Sigmoid colon (tissue), 7 donors: ENCODE measurements at regions of chr12 and their contacts with region 1.

Region 1: GRCh38 chr12:642633-643474 is 20.4 kb downstream of the NINJ2 start:
- DNase-seq: peak; percentile 87
- H3K4me3 ChIP-seq: peak overlapping the region; percentile 59 to 76 (median 68)
- H3K27ac ChIP-seq: peak overlapping the region; percentile 89 to 97 (median 96)
- H3K4me1 ChIP-seq: peaks cover 0 to 45% (median 41%) of the 10 kb centered on the region in 4 donors
- H3K27me3 ChIP-seq: no peaks in the 10 kb centered on the region
- CTCF ChIP-seq: peak in 2 of 4 experiments; percentile 37 to 42
- EP300 ChIP-seq: no peak
- POLR2A ChIP-seq: no peak

Region 2: DNA sequence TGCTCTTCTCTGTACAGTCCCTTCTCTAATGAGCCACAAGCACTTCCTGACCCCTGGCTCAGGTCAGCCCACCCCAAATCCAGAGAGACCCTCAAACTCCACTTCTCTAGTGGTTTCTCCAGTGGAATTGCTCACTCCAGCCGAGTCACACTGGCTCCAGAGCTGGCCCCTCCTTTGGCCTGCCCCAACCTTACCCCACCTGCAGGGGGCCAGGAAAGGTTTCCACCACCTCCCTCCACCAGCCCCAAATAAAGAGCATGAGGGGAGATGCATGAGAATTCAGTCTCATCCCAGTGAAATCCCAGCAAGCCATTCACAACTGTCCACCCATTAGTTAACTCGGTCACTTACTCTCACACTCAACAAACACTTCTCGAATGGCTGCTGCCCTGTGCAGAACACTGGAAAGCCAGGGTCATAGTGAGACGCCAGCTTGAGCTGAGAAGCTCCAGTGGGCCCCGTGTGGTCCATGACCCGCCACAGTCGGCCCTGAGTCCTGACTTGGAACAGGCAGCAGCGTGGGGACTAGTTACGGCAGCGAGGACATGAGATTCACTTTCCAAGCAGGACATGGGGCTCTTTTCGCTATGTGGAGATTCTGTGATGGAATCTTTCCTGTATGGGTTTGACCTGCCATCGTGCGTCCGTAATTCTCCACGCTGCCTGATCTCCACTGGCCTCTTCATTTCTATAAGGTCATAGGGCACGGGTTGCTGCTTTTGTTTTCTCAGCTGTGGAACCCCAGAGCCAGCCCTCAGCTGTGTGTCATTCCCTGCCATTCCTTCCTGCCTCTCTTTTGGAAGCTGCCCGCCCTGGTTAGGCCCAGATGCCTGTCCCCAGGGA is 473.1 kb before region 1 on chr12:
- intact Hi-C with region 1: no loop called
- DNase-seq: no peak
- H3K4me3 ChIP-seq: no peak overlapping the region
- H3K27ac ChIP-seq: no peak overlapping the region
- H3K4me1 ChIP-seq: no peaks in the 10 kb centered on the region
- H3K27me3 ChIP-seq: peaks cover 0 to 23% (median 2%) of the 10 kb centered on the region in 3 donors
- CTCF ChIP-seq: no peak
- EP300 ChIP-seq: no peak
- POLR2A ChIP-seq: no peak

Region 3: DNA sequence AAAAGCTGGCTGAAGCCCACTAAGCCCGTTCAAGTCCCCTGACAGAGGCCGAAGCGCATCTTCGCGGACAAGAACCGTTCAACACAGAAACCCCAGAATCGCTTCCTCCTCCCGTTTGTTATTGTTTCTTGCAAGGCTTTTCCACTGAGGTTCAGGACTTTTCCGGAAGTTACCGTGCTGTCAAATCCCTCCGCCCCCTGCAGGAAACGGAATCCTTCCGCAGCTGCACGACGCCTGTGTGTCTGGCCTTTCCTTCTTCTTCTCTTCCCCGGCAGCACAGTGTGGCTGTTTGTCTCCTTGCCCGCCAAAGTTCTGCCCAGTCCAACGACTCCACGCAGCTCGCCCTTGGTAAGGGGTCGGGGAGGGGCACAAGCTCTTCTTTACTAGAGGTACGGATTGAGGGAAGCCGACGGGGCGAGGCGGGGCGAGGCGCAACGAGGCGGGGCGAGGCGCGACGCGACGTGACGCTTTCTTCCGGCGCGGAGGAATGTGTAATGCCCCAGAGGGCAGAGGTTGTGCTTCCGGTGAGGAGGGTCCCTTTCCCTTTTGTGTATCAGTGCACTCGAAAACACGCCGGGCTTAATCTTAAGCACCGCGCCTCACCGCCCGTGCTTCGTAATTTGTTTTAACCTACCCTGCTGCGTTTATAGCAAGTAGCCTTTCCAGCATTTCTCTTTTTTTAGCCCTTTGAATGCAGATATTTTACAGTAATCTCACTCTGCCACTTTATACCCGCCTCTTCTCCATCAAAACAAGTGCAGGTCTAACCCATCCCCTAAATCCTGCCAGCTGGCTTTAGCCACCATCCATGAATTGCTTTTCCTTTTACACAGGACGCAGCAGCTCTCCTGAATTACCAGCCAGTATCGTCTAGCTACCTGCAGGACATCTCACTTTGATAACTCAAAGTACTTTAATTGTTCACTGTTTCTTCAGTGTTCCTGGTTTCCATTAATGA is 253.4 kb before region 1 on chr12 and contains the start of gene KDM5A:
- intact Hi-C with region 1: loop called (anchors 5 kb)
- DNase-seq: peak; percentile 95
- H3K4me3 ChIP-seq: peak within 1 kb of the TSS; percentile 83 to 89 (median 86)
- H3K27ac ChIP-seq: peak within 1 kb of the TSS; percentile 91 to 94 (median 93)
- H3K4me1 ChIP-seq: peaks cover 0 to 35% (median 34%) of the 10 kb centered on the region in 4 donors
- H3K27me3 ChIP-seq: no peaks in the 10 kb centered on the region
- CTCF ChIP-seq: peak in 1 of 4 experiments; percentile 12
- EP300 ChIP-seq: peak in 1 of 4 donors; percentile 25
- POLR2A ChIP-seq: peak in 1 of 2 donors; percentile 15
- total RNA-seq, gene KDM5A: 34.2 to 65.6 (median 40.0) TPM

Region 4: GRCh38 chr12:569803-570434 is 72.9 kb before region 1 on chr12:
- intact Hi-C with region 1: loop called (anchors 2 kb)
- DNase-seq: peak; percentile 93
- H3K4me3 ChIP-seq: peak overlapping the region; percentile 49 to 67 (median 62)
- H3K27ac ChIP-seq: peak overlapping the region; percentile 88 to 91 (median 90)
- H3K4me1 ChIP-seq: peaks cover 0 to 32% (median 24%) of the 10 kb centered on the region in 4 donors
- H3K27me3 ChIP-seq: no peaks in the 10 kb centered on the region
- CTCF ChIP-seq: peak; percentile 84 to 94 (median 90)
- EP300 ChIP-seq: no peak
- POLR2A ChIP-seq: no peak

Region 5: DNA sequence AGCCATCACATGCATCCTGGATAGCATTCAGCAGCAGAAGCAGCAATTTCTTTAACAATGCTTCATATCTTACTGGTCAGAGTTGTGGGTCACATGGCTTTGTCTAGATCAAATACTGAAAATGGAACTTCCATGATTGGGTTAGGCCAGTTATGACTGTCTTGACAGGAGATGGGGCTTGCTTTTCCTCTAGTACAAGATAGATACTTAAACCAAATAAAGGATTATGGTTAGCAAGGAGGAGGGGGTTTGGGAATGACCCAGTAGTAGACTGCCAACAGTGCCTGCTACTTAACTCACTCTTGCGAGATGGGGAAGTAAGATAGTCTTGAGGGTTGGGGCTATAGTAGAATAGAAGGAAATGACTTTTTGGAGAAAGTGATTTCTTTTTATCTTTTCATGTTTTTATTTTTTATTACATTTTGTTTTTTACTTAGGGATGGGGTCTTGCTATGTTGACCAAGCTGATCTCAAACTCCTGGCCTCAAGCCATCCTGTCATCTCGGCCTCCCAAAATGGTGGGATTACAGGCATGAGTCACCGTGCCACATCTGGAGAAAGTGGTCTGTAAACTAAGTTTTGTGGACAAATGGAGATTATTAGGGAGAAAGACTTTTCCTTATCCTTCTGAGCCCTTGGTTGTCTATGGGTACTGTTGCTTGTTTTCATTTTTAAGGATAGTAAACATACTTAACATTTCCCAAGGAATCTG is 147.2 kb after region 1 on chr12:
- intact Hi-C with region 1: no loop called
- DNase-seq: no peak
- H3K4me3 ChIP-seq: no peak overlapping the region
- H3K27ac ChIP-seq: no peak overlapping the region
- H3K4me1 ChIP-seq: peaks cover 0 to 66% (median 32%) of the 10 kb centered on the region in 4 donors
- H3K27me3 ChIP-seq: no peaks in the 10 kb centered on the region
- CTCF ChIP-seq: no peak
- EP300 ChIP-seq: no peak
- POLR2A ChIP-seq: no peak

Region 6: DNA sequence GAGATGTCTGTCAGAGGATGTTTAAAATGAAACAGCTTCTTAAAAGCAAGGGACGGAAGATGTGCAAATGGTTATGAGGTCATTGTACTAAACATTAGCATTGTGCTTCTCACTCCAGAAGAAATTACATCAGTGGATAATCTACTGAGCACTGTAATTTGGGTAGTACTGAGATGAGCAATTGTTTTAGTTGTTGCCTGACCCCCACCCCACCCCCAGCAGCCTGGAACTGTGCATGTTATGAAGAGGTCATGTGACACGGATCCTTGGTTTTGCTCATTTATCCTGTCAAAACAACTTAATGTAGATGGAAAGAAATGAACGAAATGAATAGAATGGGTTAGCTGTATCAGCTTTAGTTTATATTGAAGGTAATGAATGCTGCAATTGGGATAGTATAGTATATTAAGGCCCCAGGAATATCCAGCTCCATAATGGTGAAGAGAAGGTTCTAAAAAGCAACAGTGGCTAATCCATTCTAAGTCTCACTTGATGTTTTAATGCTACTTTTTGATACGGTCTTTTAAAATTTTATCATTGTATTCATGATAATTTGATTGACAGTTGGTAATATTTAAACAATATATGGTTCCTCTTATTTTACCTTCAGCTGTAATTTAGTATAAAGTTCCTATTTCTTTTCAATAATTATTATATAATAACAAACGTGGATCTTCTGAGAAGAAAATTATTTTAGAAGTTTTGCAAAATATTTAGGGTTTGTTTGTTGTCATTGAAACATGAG is 168.0 kb after region 1 on chr12:
- intact Hi-C with region 1: loop called (anchors 10 kb)
- DNase-seq: no peak
- H3K4me3 ChIP-seq: no peak overlapping the region
- H3K27ac ChIP-seq: no peak overlapping the region
- H3K4me1 ChIP-seq: peaks cover 0 to 48% (median 39%) of the 10 kb centered on the region in 4 donors
- H3K27me3 ChIP-seq: no peaks in the 10 kb centered on the region
- CTCF ChIP-seq: no peak
- EP300 ChIP-seq: no peak
- POLR2A ChIP-seq: no peak

Region 7: DNA sequence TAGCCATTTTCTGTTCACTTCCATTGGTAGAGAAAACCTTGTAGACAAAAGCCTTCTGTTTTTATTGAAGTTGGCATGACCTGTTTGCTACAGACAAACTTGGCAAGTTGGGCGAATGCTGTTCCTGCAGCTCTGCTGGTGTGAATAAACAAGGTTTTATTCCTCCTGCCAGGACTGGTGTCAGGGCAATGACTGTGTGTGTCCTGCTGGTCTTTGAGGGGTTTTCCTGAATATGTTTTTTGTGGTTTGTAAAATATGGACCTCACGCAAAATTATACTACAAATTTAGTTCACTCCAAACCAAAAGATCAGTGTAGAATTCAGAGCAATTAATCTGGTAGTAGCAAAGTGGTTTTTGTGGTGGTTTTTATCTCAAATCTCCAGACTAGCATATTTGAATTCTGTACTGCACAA is 489.0 kb after region 1 on chr12:
- intact Hi-C with region 1: no loop called
- DNase-seq: no peak
- H3K4me3 ChIP-seq: no peak overlapping the region
- H3K27ac ChIP-seq: peak overlapping the region in 1 of 4 donors; percentile 36
- H3K4me1 ChIP-seq: peaks cover 0 to 10% (median 0%) of the 10 kb centered on the region in 4 donors
- H3K27me3 ChIP-seq: no peaks in the 10 kb centered on the region
- CTCF ChIP-seq: no peak
- EP300 ChIP-seq: no peak
- POLR2A ChIP-seq: no peak